ENCODE measurements at regions of chr20 and their contacts with region 1.

Region 1: GRCh38 chr20:3420211-3420707 is 12.8 kb upstream of the DNAAF9 start:
- DNase-seq: peak; percentile 62
- H3K4me3 Mint-ChIP-seq: no peak overlapping the region
- H3K27ac Mint-ChIP-seq: peak overlapping the region; percentile 71
- H3K4me1 Mint-ChIP-seq: peaks cover 9% of the 10 kb centered on the region
- H3K27me3 Mint-ChIP-seq: peaks cover 11% of the 10 kb centered on the region

Region 2: GRCh38 chr20:3383878-3384495 is 36.3 kb before region 1 on chr20:
- intact Hi-C with region 1: loop called (anchors 1 kb)
- DNase-seq: no peak
- H3K4me3 Mint-ChIP-seq: no peak overlapping the region
- H3K27ac Mint-ChIP-seq: peak overlapping the region; percentile 66
- H3K4me1 Mint-ChIP-seq: peaks cover 12% of the 10 kb centered on the region
- H3K27me3 Mint-ChIP-seq: peaks cover 1% of the 10 kb centered on the region